Activated CD4-positive, alpha-beta memory T cell treated with anti-CD3 and anti-CD28 coated beads for 36 hours (primary cell): ENCODE measurements at regions of chr12 and their contacts with region 1.

Region 1: DNA sequence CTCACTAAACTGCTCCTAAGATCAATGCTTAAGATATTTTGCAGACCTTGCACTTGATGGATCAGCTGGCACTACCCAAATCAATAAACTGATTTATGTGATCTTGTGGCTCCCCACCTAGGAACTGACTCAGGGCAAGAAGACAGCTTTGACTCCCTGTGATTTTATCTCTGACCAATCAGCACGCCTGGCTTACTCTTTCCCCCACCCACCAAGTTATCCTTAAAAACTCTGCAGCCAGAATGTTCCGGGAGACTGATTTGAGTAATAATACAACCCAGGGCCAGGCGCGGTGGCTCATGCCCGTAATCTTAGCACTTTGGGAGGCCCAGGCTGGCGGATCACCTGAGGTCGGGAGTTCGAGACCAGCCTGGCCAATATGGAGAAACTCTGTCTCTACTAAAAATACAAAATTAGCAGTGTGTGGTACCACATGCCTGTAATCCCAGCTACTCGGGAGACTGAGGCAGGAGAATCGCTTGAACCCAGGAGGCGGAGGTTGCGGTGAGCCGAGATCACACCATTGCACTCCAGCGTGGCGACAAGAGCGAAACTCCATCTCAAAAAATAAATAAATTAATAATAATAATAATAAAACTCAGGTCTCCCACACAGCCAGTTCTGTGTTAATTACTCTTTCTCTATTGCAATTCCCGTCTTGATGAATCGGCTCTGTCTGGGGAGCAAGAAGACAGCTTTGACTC is 12.0 kb downstream of the MORN3 start:
- DNase-seq: peak; percentile 79
- H3K4me3 Mint-ChIP-seq: no peak overlapping the region
- H3K27ac Mint-ChIP-seq: peak overlapping the region; percentile 98
- H3K4me1 Mint-ChIP-seq: peaks cover 52% of the 10 kb centered on the region
- H3K27me3 Mint-ChIP-seq: no peaks in the 10 kb centered on the region

Region 2: DNA sequence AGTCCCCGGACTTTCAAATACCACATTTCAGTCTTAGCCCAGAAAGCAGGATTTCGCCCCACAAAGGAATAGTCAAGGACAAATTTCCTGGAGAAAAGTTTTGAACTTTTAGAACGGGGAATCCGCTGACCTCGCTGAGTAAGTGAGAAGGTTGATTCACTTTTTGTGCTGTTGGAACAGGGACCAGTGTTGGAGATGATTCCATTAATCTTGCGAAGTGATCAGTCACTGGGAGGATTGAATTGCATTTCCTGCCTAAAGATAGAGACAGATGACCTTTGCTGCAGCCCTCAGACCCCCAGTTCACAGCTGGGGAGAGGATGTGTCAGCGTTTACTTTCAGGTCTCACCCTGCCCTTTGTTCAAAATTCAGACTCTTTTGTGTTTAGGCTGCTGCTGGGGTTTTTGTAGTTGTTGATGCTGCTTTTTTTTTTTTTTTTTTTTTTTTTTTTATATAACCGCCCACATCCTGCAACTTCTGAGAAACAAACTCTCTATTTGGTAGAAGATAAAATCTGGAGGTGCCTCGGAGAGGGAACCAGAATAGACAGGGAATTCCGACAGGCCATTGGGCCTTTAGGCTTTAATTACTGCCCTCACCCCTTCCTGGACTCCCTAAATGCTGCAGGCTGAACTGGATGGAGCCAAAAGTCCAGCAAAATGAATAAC is 66.8 kb before region 1 on chr12:
- CTCF ChIA-PET with region 1: no interaction called
- POLR2A ChIA-PET with region 1: no interaction called
- intact Hi-C with region 1: loop called (anchors 2 kb)
- DNase-seq: peak; percentile 80
- H3K4me3 Mint-ChIP-seq: peak overlapping the region; percentile 82
- H3K27ac Mint-ChIP-seq: peak overlapping the region; percentile 98
- H3K4me1 Mint-ChIP-seq: peaks cover 26% of the 10 kb centered on the region
- H3K27me3 Mint-ChIP-seq: no peaks in the 10 kb centered on the region

Region 3: GRCh38 chr12:121637231-121637914 is 20.1 kb before region 1 on chr12:
- CTCF ChIA-PET with region 1: interaction called, 3 read pairs
- POLR2A ChIA-PET with region 1: interaction called, 5 read pairs
- intact Hi-C with region 1: loop called (anchors 2 kb)
- DNase-seq: peak; percentile 79
- H3K4me3 Mint-ChIP-seq: peak overlapping the region; percentile 45
- H3K27ac Mint-ChIP-seq: peak overlapping the region; percentile 90
- H3K4me1 Mint-ChIP-seq: peaks cover 47% of the 10 kb centered on the region
- H3K27me3 Mint-ChIP-seq: no peaks in the 10 kb centered on the region

Region 4: GRCh38 chr12:121839993-121840761 is 182.7 kb after region 1 on chr12:
- CTCF ChIA-PET with region 1: no interaction called
- POLR2A ChIA-PET with region 1: no interaction called
- intact Hi-C with region 1: no loop called
- DNase-seq: no peak
- H3K4me3 Mint-ChIP-seq: peak overlapping the region; percentile 99
- H3K27ac Mint-ChIP-seq: peak overlapping the region; percentile 92
- H3K4me1 Mint-ChIP-seq: peaks cover 15% of the 10 kb centered on the region
- H3K27me3 Mint-ChIP-seq: no peaks in the 10 kb centered on the region